ENCODE measurements at regions of chr6 and their contacts with region 1.

Region 1: GRCh38 chr6:166989427-166990032 is 9.7 kb upstream of the CEP43 start:
- DNase-seq: peak; percentile 32
- CTCF ChIP-seq: peak; percentile 67

Region 2: GRCh38 chr6:166786704-166787293 is 202.7 kb before region 1 on chr6:
- CTCF ChIA-PET with region 1: interaction called, 24 read pairs
- POLR2A ChIA-PET with region 1: no interaction called
- DNase-seq: peak; percentile 72
- CTCF ChIP-seq: peak; percentile 53

Region 3: DNA sequence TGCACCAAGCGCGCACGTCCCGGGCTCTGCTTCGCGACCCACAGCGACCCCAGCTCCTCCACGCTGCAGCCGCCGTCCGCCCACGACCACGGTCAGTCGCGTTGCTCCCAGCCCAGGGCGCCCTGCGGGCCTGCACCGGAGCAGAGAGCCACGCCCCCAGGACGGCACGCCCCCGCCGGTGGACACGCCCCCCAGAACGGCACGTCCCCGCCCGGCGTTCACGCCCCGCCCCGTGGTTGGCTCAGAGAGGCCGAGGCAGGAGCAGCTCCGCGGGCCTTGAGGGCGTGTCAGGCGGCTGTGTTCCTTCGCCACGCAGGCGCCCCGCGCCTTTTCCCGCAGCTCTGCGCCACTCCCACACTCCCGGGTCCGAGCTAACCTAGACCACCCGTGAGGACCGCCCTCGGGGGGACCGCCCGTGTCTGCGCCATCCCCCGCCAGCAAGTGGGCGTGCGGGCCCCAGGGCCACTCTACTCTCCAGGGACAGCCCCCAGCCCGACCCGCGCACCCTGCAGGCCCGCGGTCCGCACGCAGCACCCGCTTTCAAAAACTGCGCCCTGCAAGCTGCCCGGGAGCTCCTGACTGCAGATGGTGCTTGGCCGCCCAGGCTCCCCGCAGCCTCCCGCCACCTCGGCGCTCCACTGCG is 33.0 kb before region 1 on chr6 and contains the start of gene RNASET2:
- CTCF ChIA-PET with region 1: interaction called, 132 read pairs
- POLR2A ChIA-PET with region 1: no interaction called
- DNase-seq: peak; percentile 93
- CTCF ChIP-seq: no peak

Region 4: DNA sequence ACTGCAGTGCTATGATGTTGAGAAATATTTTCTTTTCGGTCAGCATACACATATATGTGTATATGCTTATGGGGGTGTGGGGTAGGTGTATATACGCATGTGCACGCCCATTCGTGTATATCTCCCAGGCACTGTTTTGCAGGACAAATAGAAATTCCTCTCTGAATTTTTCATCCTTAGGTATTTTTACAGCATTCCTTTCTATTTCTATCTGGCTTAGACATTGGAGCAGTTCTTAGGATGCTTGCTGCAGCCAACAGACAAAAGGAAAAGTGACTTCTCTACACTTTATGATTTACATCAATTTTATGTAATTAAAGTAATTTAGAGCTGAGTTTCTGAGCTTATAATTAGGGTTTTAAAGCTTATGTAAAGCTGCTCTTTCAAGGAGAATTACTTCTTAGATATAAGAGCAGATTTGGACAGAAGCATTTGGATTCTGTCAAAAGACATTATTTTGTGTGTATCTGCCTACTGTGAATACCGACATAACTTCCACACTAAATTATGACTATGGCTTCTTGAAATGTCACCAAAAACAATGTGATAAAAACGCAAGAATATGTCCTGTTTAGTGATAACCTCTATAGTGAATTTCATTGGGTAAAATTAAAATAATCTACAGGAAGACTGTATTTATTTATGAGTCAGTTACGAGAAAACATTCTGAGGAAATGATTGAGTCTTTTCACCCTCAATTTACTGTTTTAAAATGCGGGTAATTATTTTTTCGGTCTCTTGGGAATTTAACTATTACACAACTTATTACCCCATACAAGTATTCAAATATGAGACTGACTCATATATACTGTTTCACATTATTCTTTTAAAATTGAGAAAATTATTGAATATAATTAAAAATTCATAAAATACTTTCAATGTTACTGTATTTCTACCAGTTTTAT is 11.7 kb before region 1 on chr6:
- CTCF ChIA-PET with region 1: interaction called, 58 read pairs
- POLR2A ChIA-PET with region 1: no interaction called
- DNase-seq: no peak
- CTCF ChIP-seq: no peak

Region 5: DNA sequence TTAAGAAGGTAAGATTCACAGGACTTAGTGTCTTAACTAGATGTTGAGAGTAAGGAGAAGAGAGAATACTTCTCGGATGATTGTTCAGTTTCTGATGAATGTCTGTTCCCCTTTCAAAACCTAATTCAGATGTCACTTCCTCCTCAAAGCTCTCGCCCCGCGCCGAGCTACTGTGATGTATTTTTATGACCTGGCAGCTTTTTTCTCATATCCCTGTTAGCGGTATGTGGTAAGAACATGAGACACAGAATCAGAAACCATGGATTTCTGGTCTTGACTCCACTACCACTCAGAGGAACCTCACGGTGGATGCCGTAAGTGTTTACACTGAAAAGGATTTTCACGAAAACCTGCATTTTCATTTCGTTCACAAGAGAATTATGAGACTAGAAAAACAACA is 58.0 kb after region 1 on chr6:
- CTCF ChIA-PET with region 1: interaction called, 13 read pairs
- POLR2A ChIA-PET with region 1: no interaction called
- DNase-seq: peak; percentile 79
- CTCF ChIP-seq: no peak

Region 6: GRCh38 chr6:167200806-167201205 is 211.3 kb after region 1 on chr6:
- CTCF ChIA-PET with region 1: no interaction called
- POLR2A ChIA-PET with region 1: no interaction called
- DNase-seq: no peak
- CTCF ChIP-seq: no peak